ENCODE measurements at regions of chr6 and their contacts with region 1.

Region 1: DNA sequence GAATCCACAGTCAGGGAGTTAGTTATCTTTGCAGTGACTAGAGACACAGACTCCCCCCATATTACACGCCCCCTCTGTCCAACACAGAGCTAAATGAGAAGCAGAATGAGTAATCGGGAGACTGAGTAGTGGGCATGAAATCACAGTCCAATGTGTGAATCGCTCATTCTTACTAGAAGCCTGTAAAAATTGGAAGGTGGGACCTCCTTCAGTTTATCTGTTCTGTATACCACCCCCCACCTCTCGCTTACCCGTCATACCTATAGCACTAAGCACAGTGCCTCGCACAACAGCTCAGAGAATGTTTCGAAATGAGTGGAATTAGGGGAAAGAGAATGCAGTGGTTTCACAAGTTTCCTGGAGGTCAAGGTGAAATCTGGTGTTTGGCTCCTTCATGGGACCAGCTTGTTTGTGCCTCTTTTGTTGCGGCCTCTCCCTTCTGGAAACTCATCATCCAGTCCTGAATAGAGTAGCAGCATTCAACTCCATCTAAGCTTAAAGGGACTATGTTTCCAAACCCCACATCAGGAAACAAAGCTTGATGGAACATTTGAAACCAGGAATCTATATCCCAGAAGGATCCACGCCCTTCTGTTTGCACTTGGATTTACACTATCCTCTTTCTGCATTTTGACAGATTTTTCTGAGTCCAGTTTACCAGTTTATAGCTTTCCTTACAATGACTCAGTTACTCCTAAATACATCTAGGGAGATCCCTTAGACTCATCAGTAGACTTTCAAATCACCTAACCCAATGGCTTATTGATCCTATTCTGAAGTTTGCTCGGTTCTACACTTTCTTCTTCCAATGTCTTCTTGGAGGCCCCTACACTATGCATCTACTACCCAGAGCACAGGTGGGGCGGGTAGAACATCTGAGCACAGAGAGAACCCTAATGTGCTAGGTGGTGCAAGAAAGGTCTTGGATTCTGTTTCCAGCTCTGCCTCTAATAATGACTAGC is 59.2 kb upstream of the PIM1 start:
- DNase-seq: peak; percentile 34
- H3K4me3 Mint-ChIP-seq: peak overlapping the region; percentile 48
- H3K27ac Mint-ChIP-seq: peak overlapping the region; percentile 82
- H3K4me1 Mint-ChIP-seq: peaks cover 38% of the 10 kb centered on the region
- H3K27me3 Mint-ChIP-seq: no peaks in the 10 kb centered on the region

Region 2: DNA sequence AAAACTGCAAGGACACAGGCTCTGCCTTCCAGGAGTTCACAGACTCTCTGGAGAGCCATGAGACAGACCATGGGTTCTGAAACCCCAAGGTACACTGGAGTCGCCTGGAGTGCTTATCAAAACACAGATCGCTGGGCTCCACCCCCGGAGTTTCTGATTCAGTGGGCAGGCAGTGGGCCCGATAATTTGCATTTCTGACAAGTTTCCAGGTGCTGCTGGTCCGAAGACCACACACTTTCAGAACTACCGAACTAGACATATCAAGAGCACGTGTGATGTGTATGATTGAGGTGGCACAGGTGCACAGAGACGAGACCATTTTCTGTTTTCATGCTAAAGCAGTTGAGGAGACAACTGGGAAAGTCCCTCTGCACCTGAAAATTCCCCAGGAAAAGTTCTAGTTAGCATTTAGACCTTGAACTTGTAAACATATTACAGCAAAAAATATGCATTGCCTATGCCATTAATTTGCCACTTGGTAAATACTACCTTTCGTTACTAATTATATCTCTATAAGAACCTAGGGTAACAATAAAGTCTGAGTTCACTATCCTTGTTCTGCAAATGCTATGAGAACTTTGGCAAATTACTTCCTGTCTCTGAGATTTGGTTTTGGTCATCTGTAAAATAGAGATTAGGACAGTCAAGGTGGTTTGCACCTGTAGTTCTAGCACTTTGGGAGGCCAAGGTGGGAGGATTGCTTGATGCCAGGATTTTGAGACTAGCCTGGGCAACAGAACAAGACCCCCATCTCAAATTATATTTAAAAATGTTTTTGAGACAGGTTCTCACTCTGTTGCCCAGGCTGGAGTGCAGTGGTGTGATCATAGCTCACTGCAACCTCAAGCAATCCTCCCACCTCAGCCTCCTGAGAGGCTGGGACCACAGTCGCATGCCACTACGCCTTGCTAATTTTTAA is 44.9 kb after region 1 on chr6:
- intact Hi-C with region 1: loop called (anchors 1 kb)
- DNase-seq: peak; percentile 52
- H3K4me3 Mint-ChIP-seq: peak overlapping the region; percentile 24
- H3K27ac Mint-ChIP-seq: peak overlapping the region; percentile 81
- H3K4me1 Mint-ChIP-seq: peaks cover 30% of the 10 kb centered on the region
- H3K27me3 Mint-ChIP-seq: no peaks in the 10 kb centered on the region

Measured in activated T-helper 1 cell treated with anti-CD3 and anti-CD28 coated beads, Interleukin-12 subunit alpha, Interleukin-12 subunit beta, Interleukin-2, Interleukin-4 antibody, amounts not matched to agents 30 ng/mL and 10 ng/mL and 1 ng/mL, durations not matched to agents 14 hours and 24 hours and 36 hours (primary cell).